Activated CD4-positive, alpha-beta memory T cell treated with anti-CD3 and anti-CD28 coated beads for 36 hours (primary cell): ENCODE measurements at regions of chr12 and their contacts with region 1.

Region 1: DNA sequence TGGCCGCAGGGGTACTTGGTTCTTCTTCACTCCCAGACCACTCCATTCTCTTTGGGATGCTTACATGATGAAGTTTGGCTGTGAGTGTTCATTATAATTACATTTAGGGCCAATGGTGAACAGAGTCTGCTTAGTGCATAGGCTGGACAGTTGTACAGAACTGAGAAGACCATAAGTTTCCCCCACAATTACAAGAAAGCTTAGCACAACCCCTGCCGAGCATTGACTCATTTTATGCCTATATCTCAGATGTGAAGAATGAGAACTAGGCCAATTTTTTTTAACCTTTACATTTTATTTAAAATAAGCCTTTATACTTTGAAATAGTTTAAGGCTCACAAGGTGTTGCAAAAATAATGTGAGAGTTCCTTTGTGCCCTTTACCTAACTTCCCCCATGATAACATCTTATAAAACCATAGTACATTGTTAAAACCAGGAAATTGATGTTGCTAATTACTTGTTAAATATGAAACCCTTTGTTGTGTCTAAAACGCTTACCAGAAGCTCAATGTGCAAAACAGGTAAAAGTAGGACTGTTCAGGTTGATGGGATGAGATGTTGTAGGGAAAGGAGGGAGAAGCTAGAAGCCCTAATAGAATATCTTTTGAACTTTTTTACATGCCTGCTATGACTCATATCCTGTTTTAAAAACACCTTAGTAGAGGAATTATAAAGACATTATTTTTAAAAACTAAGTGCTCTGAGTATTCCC is 47.2 kb downstream of the ALDH1L2 start:
- DNase-seq: no peak
- H3K4me3 Mint-ChIP-seq: no peak overlapping the region
- H3K27ac Mint-ChIP-seq: peak overlapping the region; percentile 63
- H3K4me1 Mint-ChIP-seq: peaks cover 39% of the 10 kb centered on the region
- H3K27me3 Mint-ChIP-seq: no peaks in the 10 kb centered on the region

Region 2: GRCh38 chr12:104986022-104986941 is 50.8 kb before region 1 on chr12 and contains the start of gene NOPCHAP1:
- CTCF ChIA-PET with region 1: no interaction called
- POLR2A ChIA-PET with region 1: no interaction called
- intact Hi-C with region 1: loop called (anchors 2 kb)
- DNase-seq: peak; percentile 91
- H3K4me3 Mint-ChIP-seq: peak within 1 kb of the TSS; percentile 77
- H3K27ac Mint-ChIP-seq: peak within 1 kb of the TSS; percentile 59
- H3K4me1 Mint-ChIP-seq: peaks cover 28% of the 10 kb centered on the region
- H3K27me3 Mint-ChIP-seq: peaks cover 3% of the 10 kb centered on the region
- total RNA-seq, gene NOPCHAP1: 30.5 to 30.9 TPM